CD8-positive, alpha-beta memory T cell (primary cell): ENCODE measurements at regions of chr2 and their contacts with region 1.

Region 1: GRCh38 chr2:102366406-102367112 is 11.0 kb downstream of the IL18R1 start:
- DNase-seq: peak in 2 of 5 donors; percentile 38 to 53
- H3K4me3 ChIP-seq: peak overlapping the region; percentile 26
- H3K4me3 Mint-ChIP-seq: peak overlapping the region; percentile 66 to 86 (median 78)
- H3K27ac ChIP-seq: no peak overlapping the region
- H3K27ac Mint-ChIP-seq: peak overlapping the region; percentile 78 to 98 (median 90)
- H3K4me1 ChIP-seq: peaks cover 38% of the 10 kb centered on the region
- H3K4me1 Mint-ChIP-seq: peaks cover 67 to 69% (median 68%) of the 10 kb centered on the region in 3 donors
- H3K27me3 ChIP-seq: no peaks in the 10 kb centered on the region
- H3K27me3 Mint-ChIP-seq: no peaks in the 10 kb centered on the region

Region 2: DNA sequence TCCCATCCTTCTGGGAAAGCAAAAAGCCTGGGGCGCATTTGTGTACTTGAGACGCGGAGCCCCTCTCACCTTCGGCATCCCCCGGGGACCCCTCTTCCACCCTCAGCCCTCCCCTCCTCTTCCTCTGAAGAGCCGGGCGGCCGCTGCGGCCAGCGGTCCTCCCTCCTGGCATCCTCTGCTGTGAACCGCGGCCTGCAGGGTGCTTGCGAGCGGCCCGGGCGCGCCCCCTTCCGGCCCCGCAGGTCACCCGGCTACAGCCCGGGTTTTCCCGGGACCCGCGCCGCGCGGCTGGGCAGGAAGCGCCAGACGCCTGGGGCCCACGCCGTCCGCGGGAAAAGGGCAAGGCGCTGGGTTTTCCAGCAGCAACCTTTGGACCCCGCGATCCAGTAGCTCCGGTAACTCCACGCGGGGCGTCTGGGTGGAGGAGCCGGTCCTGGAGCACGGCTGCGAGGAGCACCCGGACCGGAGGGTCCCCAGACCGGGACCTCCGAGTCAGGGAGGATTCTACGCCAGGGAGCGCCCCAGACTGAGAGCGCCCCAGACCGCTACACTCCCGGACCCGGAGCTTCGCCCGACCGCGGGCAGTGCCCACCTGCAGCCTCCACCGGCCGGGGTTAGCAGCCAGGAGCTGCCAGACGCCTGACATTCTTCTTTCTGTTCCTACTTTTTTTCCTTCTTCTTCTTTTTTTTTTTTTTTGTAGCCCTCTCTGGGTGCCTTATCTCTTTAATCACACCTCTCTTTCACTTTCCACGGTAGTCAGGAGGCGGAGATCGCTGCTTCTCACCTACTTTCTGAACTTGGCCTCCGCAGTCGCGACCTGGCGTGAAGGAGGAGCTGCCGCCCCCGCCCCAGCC is 10.8 kb before region 1 on chr2 and contains the start of gene IL18R1:
- CTCF ChIA-PET with region 1: interaction called, 12 read pairs
- POLR2A ChIA-PET with region 1: interaction called, 3 read pairs
- DNase-seq: peak; percentile 60 to 74 (median 68)
- H3K4me3 ChIP-seq: peak within 1 kb of the TSS; percentile 68
- H3K4me3 Mint-ChIP-seq: peak within 1 kb of the TSS; percentile 92 to 100 (median 98)
- H3K27ac ChIP-seq: peak within 1 kb of the TSS; percentile 58
- H3K27ac Mint-ChIP-seq: peak within 1 kb of the TSS; percentile 89 to 99 (median 97)
- H3K4me1 ChIP-seq: peaks cover 10% of the 10 kb centered on the region
- H3K4me1 Mint-ChIP-seq: peaks cover 36 to 52% (median 47%) of the 10 kb centered on the region in 3 donors
- H3K27me3 ChIP-seq: no peaks in the 10 kb centered on the region
- H3K27me3 Mint-ChIP-seq: peaks cover 0 to 2% of the 10 kb centered on the region in 2 donors
- total RNA-seq, gene IL18R1: 17.6 to 17.9 TPM

Region 3: DNA sequence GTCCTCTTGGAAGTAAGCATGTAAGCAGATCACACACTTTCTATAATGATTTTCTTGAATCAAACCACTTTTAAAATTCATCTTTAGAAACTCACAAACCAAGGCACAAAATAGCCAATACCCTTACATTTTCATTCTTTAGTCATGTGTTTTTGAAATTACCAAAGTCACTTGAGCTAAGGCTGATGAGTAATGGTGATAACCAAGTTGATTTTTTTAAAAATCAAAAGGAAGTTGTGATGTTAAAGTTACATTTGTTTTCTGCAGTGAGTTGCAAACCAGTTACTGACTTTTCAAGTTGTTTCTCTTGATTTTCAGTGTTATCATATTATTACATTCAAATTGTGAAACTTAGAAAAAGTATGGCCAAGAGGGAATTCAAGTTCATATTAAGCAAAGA is 34.9 kb after region 1 on chr2:
- CTCF ChIA-PET with region 1: no interaction called
- POLR2A ChIA-PET with region 1: no interaction called
- DNase-seq: no peak
- H3K4me3 ChIP-seq: no peak overlapping the region
- H3K4me3 Mint-ChIP-seq: no peak overlapping the region
- H3K27ac ChIP-seq: no peak overlapping the region
- H3K27ac Mint-ChIP-seq: peak overlapping the region in 2 of 8 donors; percentile 15 to 26
- H3K4me1 ChIP-seq: no peaks in the 10 kb centered on the region
- H3K4me1 Mint-ChIP-seq: peaks cover 22 to 28% (median 23%) of the 10 kb centered on the region in 3 donors
- H3K27me3 ChIP-seq: no peaks in the 10 kb centered on the region
- H3K27me3 Mint-ChIP-seq: no peaks in the 10 kb centered on the region